Activated CD4-positive, alpha-beta memory T cell treated with anti-CD3 and anti-CD28 coated beads for 36 hours (primary cell): ENCODE measurements at regions of chr7 and their contacts with region 1.

Region 1: DNA sequence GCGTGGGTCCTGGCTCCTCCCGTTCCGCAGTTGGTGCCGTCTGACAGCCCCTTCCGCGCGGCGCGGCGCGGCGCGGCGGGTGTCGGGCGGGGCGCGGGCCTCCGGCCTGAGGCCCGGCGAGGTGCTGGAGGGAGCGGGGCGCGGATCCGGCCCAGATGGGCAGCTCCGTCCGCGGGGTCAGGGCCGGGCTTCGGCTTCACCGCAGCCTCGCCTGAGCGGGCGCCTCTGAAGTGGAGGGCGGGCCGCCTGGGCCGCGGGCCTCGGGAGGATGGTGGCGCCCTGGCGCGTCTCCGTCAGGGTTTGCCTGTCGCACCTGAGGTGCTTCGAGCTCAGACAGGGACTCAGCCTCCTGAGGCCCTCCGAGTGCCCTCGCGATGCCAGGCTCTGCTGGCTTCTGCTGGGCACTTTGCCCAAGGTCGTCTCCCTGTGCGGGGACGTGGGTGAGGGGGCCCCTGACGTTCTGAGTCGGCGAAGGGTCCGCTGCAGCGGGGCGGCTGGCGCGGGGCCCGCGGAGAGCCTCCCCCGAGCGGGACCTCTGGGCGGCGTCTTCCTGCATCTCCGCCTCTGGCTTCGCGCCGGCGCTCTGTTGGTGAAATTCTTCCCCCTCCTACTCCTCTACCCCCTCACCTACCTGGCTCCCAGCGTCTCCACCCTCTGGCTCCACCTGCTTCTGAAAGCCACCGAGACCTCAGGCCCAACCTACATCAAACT is 473 bp downstream of the ADCK2 start:
- DNase-seq: peak; percentile 67
- H3K4me3 Mint-ChIP-seq: peak overlapping the region; percentile 82
- H3K27ac Mint-ChIP-seq: peak overlapping the region; percentile 54
- H3K4me1 Mint-ChIP-seq: peaks cover 33% of the 10 kb centered on the region
- H3K27me3 Mint-ChIP-seq: no peaks in the 10 kb centered on the region

Region 2: GRCh38 chr7:140446464-140446863 is 226.8 kb before region 1 on chr7:
- CTCF ChIA-PET with region 1: no interaction called
- POLR2A ChIA-PET with region 1: no interaction called
- intact Hi-C with region 1: no loop called
- DNase-seq: no peak
- H3K4me3 Mint-ChIP-seq: no peak overlapping the region
- H3K27ac Mint-ChIP-seq: no peak overlapping the region
- H3K4me1 Mint-ChIP-seq: peaks cover 30% of the 10 kb centered on the region
- H3K27me3 Mint-ChIP-seq: no peaks in the 10 kb centered on the region

Region 3: GRCh38 chr7:140653319-140654108 is 19.7 kb before region 1 on chr7:
- CTCF ChIA-PET with region 1: interaction called, 7 read pairs
- POLR2A ChIA-PET with region 1: interaction called, 3 read pairs
- intact Hi-C with region 1: loop called (anchors 1 kb)
- DNase-seq: no peak
- H3K4me3 Mint-ChIP-seq: no peak overlapping the region
- H3K27ac Mint-ChIP-seq: no peak overlapping the region
- H3K4me1 Mint-ChIP-seq: peaks cover 17% of the 10 kb centered on the region
- H3K27me3 Mint-ChIP-seq: peaks cover 5% of the 10 kb centered on the region

Region 4: DNA sequence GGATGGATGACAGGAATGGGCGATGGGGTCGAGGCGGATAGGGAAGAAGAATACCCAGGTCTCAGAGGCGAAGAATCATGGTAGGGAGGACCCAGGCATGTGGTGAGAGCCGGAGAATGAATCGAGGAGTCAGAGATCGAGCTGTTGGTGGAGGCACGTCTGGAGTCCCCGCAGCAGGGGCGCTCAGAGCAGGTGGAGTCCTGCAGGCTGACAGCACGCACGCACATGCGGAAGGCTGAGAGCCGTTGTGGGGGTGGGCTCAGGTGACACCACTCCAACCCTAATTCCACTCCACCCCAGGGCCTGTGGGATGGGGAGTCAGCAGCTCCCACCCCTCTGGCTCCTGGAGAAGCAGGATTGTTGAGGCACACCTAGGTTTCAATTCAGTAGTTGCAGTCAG is 11.3 kb after region 1 on chr7:
- CTCF ChIA-PET with region 1: no interaction called
- POLR2A ChIA-PET with region 1: no interaction called
- intact Hi-C with region 1: no loop called
- DNase-seq: no peak
- H3K4me3 Mint-ChIP-seq: no peak overlapping the region
- H3K27ac Mint-ChIP-seq: no peak overlapping the region
- H3K4me1 Mint-ChIP-seq: no peaks in the 10 kb centered on the region
- H3K27me3 Mint-ChIP-seq: no peaks in the 10 kb centered on the region

Region 5: GRCh38 chr7:140696680-140697446 is 23.6 kb after region 1 on chr7 and contains the start of gene NDUFB2:
- CTCF ChIA-PET with region 1: interaction called, 3 read pairs
- POLR2A ChIA-PET with region 1: interaction called, 3 read pairs
- intact Hi-C with region 1: loop called (anchors 1 kb)
- DNase-seq: peak; percentile 80
- H3K4me3 Mint-ChIP-seq: peak within 1 kb of the TSS; percentile 95
- H3K27ac Mint-ChIP-seq: peak within 1 kb of the TSS; percentile 97
- H3K4me1 Mint-ChIP-seq: peaks cover 32% of the 10 kb centered on the region
- H3K27me3 Mint-ChIP-seq: no peaks in the 10 kb centered on the region
- total RNA-seq, gene NDUFB2: 171 to 183 TPM